ENCODE measurements at regions of chrX and their contacts with region 1.

Region 1: GRCh38 chrX:68828740-68829552 is at the start of gene EFNB1:
- DNase-seq: peak; percentile 85

Region 2: DNA sequence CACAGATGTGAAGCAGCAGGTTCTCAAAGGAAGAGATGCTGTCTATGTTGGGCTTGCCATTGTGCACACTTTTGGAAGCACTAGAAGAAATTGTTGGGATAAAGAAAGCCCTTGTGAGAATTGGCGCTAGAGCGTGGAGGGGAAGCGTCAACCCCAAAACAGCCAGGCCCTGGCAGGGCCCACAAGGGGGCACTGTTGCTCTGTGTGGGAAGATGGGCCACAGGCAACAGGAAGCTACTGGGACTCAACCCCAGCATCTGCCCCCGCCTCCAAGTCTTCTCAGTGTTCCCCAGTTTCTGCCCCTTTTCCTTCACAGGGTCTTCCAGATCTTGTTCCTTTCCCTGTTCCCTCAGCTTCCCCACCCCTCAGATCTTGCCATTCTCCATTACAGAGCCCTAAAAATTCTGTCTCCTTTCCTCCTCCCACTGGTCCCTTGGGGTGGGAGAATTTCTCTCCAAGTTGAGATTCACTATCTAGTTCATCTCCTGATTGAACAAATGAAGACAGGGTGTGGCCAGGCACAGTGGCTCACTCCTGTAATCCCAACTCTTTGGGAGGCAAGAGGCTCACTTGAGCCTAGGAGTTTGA is 95.9 kb before region 1 on chrX:
- CTCF ChIA-PET with region 1: interaction called, 16 read pairs
- POLR2A ChIA-PET with region 1: no interaction called
- DNase-seq: peak; percentile 82

Region 3: GRCh38 chrX:69060631-69061408 is 231.9 kb after region 1 on chrX:
- CTCF ChIA-PET with region 1: interaction called, 15 read pairs
- POLR2A ChIA-PET with region 1: interaction called, 15 read pairs
- DNase-seq: no peak

Region 4: DNA sequence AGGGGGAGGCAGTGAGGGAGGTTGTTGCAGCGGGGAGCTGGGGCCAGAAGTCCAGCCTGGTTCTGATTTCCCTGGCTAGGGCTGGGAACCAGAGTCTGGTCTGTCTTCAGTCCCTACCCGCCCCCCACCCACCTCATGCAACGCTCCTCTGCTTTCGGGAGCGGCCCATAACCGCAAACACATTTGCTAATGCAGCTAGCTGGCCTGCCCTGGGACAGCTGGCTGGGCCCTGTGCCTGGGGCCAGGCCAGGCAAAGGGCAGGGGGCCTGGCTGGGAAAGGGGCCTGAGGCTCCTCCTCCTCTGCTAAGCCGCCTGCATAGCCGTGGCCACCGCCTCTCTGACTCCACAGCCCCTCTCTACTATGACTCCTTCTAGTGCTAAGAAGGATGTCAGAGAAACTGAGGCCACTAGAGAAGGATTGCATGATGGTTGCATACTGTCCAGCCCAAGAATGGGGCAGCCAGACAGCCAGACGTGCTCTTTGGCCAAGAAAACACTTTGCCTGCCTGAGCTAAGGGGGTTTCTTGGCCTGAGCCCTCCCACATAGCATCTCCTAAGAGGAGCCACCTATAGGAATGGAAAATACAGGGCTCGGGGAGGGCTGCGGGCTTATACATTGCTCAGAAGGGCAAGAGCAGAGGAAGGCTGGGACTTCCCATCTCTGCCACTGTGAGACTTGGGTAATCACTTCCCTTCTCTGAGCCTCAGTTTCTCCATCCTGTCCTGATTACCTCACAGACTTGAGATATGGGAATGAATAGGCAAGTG is 259.4 kb after region 1 on chrX:
- CTCF ChIA-PET with region 1: interaction called, 3 read pairs
- POLR2A ChIA-PET with region 1: interaction called, 26 read pairs
- DNase-seq: no peak

Region 5: DNA sequence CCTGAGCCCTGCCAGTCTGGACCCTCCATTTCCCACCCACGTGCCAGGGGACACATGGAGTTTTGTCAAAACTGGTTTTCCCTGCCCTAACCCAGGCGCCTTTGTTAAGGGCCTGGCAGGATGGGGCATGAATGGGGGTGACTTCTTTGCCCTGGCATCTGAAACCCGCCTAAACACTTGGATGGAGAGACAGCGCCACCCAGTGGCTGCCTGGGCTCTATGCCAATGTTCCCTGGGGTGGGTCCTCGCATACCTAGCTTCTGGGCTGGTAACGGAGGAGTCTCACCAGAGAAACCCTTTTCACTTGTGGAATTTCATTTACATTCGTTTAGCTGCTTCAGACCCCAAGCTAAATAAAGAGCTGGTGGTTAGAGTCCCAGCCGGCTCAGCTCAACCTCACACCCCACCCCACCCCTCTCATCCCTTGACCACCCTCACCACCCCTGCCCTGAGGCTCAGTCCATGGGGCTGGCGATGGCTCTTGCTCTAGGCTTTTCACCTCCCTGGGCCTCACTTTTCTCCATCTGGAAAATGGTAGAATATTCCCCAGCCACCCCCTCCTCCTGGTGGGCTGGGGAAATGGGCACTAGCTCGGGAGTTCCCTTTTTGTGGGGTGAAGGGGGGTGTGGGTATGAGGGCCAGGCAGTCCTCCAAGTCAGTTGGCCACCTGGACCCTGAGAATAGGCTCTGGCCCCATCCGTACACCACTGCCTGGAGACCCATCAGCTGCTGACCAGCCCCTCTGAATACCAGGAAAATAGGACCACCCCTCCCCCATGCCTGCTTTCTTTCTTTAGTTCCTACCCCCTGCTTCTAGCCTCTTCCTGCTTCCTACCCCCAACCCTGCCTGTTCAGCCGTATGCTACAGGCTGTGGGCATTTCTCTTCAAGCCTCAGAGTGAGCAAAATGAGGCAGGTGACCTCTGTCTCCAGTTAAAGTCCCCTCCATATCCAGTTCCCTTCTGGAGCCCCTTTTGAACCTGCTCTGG is 393.5 kb after region 1 on chrX:
- CTCF ChIA-PET with region 1: interaction called, 54 read pairs
- POLR2A ChIA-PET with region 1: interaction called, 20 read pairs
- DNase-seq: peak; percentile 81

Region 6: DNA sequence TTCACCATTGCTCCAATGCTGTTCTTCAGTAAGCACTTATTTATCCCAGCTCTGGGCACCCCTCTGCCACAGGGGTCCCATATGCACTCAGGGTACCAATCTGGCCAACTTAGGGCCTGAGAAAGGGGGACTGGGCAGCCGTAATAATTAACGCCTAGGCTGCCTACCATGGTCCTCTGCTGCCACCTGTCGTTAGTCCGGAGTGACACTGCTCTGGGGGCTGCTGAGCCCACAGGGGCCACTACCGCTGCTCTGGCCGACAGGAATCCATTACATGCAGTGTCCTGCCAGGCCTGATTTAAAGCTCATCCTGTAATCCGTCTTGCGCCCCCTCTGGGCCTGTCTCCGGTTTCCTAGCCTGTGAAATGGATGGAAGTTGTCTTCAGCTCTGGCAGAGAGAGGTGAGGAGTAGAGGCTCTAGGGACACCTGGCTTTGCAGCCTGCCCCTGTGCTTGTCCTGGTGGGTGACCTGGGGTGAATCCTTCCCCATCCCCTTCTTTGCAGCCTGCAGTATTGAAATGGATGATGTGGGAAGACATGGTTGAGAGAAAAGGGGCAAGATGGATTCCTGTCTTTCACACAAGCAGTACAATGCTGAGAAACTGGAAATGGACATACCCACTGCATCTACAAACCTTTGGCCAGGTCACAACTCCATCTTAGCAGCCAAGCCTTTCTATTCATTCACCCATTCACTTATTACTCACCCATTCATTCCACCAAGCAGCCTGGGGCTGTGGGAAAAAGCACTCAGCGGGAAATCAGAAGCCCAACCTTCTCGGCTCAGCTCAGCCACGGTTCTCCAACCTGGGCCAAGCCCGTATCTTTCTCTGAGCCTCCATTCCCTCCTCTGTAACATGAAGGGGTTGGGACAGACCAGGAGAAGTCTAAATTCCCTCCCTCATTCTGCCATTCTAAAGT is 558.9 kb after region 1 on chrX:
- CTCF ChIA-PET with region 1: interaction called, 16 read pairs
- POLR2A ChIA-PET with region 1: interaction called, 8 read pairs
- DNase-seq: peak; percentile 86

Measured in HEK293T (cell line).